ENCODE measurements at regions of chr5 and their contacts with region 1.

Region 1: DNA sequence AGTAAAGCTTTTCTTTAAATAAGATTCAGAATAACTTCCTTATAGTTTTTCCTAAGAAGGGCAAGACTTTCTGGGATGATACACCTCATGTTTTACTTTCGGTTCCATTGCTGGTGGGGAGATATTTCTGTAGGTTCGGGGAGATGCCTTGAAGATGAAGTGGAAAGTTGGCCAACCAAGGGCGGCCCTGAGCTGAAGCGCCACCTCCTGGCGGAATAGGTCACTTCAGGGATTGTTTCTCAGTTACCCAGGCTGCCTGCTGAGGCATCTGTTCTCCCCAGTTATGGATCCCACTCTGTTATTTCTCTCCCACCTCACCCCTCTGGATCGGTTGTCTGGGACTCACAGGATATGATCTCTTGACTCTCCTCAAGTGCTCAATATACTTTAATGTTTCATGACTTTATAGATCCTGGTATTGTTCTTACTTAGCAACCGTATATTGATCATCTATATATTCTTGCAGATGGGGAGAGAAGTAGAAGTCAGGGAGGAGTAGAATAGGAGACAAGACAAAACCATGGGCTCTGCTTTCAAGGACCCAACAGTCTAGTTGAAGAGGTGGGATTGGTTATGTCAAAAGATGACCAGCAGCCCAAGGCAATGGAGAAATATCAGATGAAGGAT is 23.4 kb downstream of the MEGF10 start:
- DNase-seq: peak; percentile 12 to 68 (median 50)
- ATAC-seq: peak; percentile 81
- H3K4me3 ChIP-seq: no peak overlapping the region
- H3K4me3 Mint-ChIP-seq: peak overlapping the region in 1 of 10 donors; percentile 2
- H3K27ac ChIP-seq: no peak overlapping the region
- H3K27ac Mint-ChIP-seq: no peak overlapping the region
- H3K4me1 ChIP-seq: no peaks in the 10 kb centered on the region
- H3K4me1 Mint-ChIP-seq: peaks cover 0 to 7% (median 0%) of the 10 kb centered on the region in 7 donors
- H3K27me3 ChIP-seq: no peaks in the 10 kb centered on the region
- H3K27me3 Mint-ChIP-seq: peaks cover 0 to 32% (median 4%) of the 10 kb centered on the region in 5 donors

Region 2: GRCh38 chr5:126656396-126657007 is 657.5 kb before region 1 on chr5:
- CTCF ChIA-PET with region 1: no interaction called
- POLR2A ChIA-PET with region 1: no interaction called
- intact Hi-C with region 1: loop called (anchors 1 kb)
- DNase-seq: peak in 5 of 9 donors; percentile 13 to 27 (median 24)
- ATAC-seq: no peak
- H3K4me3 ChIP-seq: no peak overlapping the region
- H3K4me3 Mint-ChIP-seq: no peak overlapping the region
- H3K27ac ChIP-seq: no peak overlapping the region
- H3K27ac Mint-ChIP-seq: no peak overlapping the region
- H3K4me1 ChIP-seq: no peaks in the 10 kb centered on the region
- H3K4me1 Mint-ChIP-seq: peaks cover 0 to 8% (median 0%) of the 10 kb centered on the region in 7 donors
- H3K27me3 ChIP-seq: no peaks in the 10 kb centered on the region
- H3K27me3 Mint-ChIP-seq: peaks cover 0 to 9% (median 0%) of the 10 kb centered on the region in 5 donors

Region 3: DNA sequence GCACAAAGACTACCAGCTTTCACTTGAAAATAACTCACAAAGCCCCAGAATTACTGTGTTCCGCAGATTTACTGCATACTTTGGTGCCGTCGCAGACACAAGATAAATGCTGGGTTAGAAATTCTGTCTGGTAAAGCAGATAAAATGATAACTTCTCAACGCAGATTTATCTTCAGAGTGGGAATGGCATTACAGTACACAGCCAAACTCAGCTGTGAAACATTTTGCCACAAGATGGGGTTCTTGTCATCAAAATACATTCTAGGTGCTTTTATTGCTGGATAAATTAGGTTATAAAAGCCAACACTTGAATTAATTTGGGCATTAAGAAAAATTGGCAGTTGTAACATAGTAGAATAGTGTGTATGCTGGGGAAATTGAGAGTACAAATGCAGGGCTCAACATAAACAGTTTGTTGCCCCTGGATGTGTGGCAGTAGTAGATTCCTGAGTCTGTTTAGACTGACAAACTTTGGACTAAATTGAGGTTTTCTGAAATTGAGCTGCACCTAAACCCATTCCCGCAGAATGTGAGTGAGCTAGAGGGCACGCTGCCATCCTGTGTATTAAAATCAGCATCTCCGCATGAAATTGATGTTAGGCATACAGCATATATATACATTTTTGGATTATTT is 475.9 kb before region 1 on chr5:
- CTCF ChIA-PET with region 1: interaction called, 4 read pairs
- POLR2A ChIA-PET with region 1: no interaction called
- intact Hi-C with region 1: loop called (anchors 1 kb)
- DNase-seq: peak in 5 of 9 donors; percentile 21 to 45 (median 31)
- ATAC-seq: peak; percentile 51
- H3K4me3 ChIP-seq: no peak overlapping the region
- H3K4me3 Mint-ChIP-seq: no peak overlapping the region
- H3K27ac ChIP-seq: no peak overlapping the region
- H3K27ac Mint-ChIP-seq: peak overlapping the region in 1 of 9 donors; percentile 30
- H3K4me1 ChIP-seq: no peaks in the 10 kb centered on the region
- H3K4me1 Mint-ChIP-seq: peaks cover 0 to 8% (median 0%) of the 10 kb centered on the region in 7 donors
- H3K27me3 ChIP-seq: no peaks in the 10 kb centered on the region
- H3K27me3 Mint-ChIP-seq: no peaks in the 10 kb centered on the region

Region 4: GRCh38 chr5:126965061-126965475 is 348.9 kb before region 1 on chr5:
- CTCF ChIA-PET with region 1: interaction called, 3 read pairs
- POLR2A ChIA-PET with region 1: no interaction called
- intact Hi-C with region 1: loop called (anchors 1 to 5 kb)
- DNase-seq: no peak
- ATAC-seq: no peak
- H3K4me3 ChIP-seq: no peak overlapping the region
- H3K4me3 Mint-ChIP-seq: no peak overlapping the region
- H3K27ac ChIP-seq: no peak overlapping the region
- H3K27ac Mint-ChIP-seq: no peak overlapping the region
- H3K4me1 ChIP-seq: no peaks in the 10 kb centered on the region
- H3K4me1 Mint-ChIP-seq: peaks cover 0 to 10% (median 4%) of the 10 kb centered on the region in 7 donors
- H3K27me3 ChIP-seq: no peaks in the 10 kb centered on the region
- H3K27me3 Mint-ChIP-seq: no peaks in the 10 kb centered on the region

Region 5: GRCh38 chr5:126972062-126972895 is 341.7 kb before region 1 on chr5:
- CTCF ChIA-PET with region 1: interaction called, 3 read pairs
- POLR2A ChIA-PET with region 1: no interaction called
- intact Hi-C with region 1: loop called in 1 of 2 experiments (anchors 5 kb)
- DNase-seq: peak in 7 of 9 donors; percentile 12 to 44 (median 32)
- ATAC-seq: peak; percentile 80
- H3K4me3 ChIP-seq: peak overlapping the region; percentile 34
- H3K4me3 Mint-ChIP-seq: peak overlapping the region; percentile 62 to 93 (median 86)
- H3K27ac ChIP-seq: peak overlapping the region; percentile 53
- H3K27ac Mint-ChIP-seq: peak overlapping the region; percentile 79 to 97 (median 87)
- H3K4me1 ChIP-seq: peaks cover 7 to 21% of the 10 kb centered on the region in 2 donors
- H3K4me1 Mint-ChIP-seq: peaks cover 24 to 56% (median 38%) of the 10 kb centered on the region in 7 donors
- H3K27me3 ChIP-seq: no peaks in the 10 kb centered on the region
- H3K27me3 Mint-ChIP-seq: no peaks in the 10 kb centered on the region

Region 6: DNA sequence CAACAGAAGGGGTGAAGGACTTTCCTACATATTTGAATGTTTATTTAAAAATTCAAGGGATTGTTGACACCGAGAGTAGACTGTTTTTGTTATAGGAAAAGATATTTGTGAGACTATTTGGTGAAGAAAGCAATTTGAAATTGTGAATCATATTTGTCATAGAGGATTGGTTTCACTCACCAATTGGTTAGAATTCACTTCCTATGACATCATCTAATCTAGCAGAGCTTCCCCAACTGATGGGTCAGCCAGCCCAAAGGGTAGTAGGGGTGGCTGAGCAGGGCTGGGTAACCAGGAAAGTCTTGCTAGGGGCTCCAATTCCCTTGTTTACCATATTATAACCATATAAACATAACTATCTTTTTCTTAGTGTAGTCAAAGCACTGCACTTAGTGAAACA is 38.2 kb before region 1 on chr5:
- CTCF ChIA-PET with region 1: no interaction called
- POLR2A ChIA-PET with region 1: no interaction called
- intact Hi-C with region 1: no loop called
- DNase-seq: no peak
- ATAC-seq: no peak
- H3K4me3 ChIP-seq: no peak overlapping the region
- H3K4me3 Mint-ChIP-seq: no peak overlapping the region
- H3K27ac ChIP-seq: no peak overlapping the region
- H3K27ac Mint-ChIP-seq: no peak overlapping the region
- H3K4me1 ChIP-seq: no peaks in the 10 kb centered on the region
- H3K4me1 Mint-ChIP-seq: no peaks in the 10 kb centered on the region
- H3K27me3 ChIP-seq: peaks cover 0 to 3% of the 10 kb centered on the region in 2 donors
- H3K27me3 Mint-ChIP-seq: peaks cover 2 to 27% (median 18%) of the 10 kb centered on the region in 5 donors

Region 7: GRCh38 chr5:128276537-128277216 is 962.7 kb after region 1 on chr5:
- CTCF ChIA-PET with region 1: no interaction called
- POLR2A ChIA-PET with region 1: no interaction called
- intact Hi-C with region 1: no loop called
- DNase-seq: no peak
- ATAC-seq: no peak
- H3K4me3 ChIP-seq: no peak overlapping the region
- H3K4me3 Mint-ChIP-seq: no peak overlapping the region
- H3K27ac ChIP-seq: no peak overlapping the region
- H3K27ac Mint-ChIP-seq: no peak overlapping the region
- H3K4me1 ChIP-seq: no peaks in the 10 kb centered on the region
- H3K4me1 Mint-ChIP-seq: no peaks in the 10 kb centered on the region
- H3K27me3 ChIP-seq: no peaks in the 10 kb centered on the region
- H3K27me3 Mint-ChIP-seq: peaks cover 0 to 2% (median 0%) of the 10 kb centered on the region in 5 donors

Region 8: GRCh38 chr5:128644863-128645262 is 1330.9 kb after region 1 on chr5:
- CTCF ChIA-PET with region 1: no interaction called
- POLR2A ChIA-PET with region 1: no interaction called
- intact Hi-C with region 1: no loop called
- DNase-seq: no peak
- ATAC-seq: no peak
- H3K4me3 ChIP-seq: no peak overlapping the region
- H3K4me3 Mint-ChIP-seq: no peak overlapping the region
- H3K27ac ChIP-seq: no peak overlapping the region
- H3K27ac Mint-ChIP-seq: no peak overlapping the region
- H3K4me1 ChIP-seq: no peaks in the 10 kb centered on the region
- H3K4me1 Mint-ChIP-seq: no peaks in the 10 kb centered on the region
- H3K27me3 ChIP-seq: no peaks in the 10 kb centered on the region
- H3K27me3 Mint-ChIP-seq: no peaks in the 10 kb centered on the region

Measured in naive thymus-derived CD4-positive, alpha-beta T cell (primary cell).